HAP-1 (cell line): ENCODE measurements at regions of chr3 and their contacts with region 1.

Region 1: DNA sequence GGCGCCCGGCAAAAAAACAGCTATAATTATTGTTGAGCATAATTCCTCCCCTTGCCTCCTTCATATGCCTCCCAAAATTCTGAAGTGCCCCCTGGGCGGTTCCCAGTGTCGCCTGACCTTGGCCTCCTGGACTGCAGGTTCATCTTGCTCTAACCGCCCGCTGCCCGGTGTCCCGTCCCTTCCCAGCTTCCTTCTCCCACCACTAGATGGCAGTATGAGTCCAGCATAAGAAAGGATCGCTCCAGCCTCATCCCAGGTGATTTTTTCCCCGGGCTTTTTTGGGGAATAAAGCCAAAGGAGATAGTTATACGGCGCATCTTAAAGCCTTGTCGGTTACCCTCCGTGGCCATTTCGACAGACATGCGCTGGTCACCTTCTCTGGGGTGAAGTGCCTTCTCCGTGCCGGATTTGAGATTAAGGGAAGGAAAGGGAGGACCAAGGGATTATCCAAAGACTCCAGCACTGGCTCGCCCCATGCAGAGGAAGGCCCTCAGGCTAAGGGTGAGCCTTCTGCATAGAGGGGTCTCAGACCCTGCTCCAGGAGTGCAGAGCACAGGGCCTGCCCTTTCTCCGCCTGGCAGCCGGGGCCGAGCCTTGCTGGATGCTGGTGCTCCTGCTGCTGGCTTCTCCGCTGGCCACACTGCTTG is 45.8 kb upstream of the TRA2B start:
- DNase-seq: peak; percentile 65 to 85
- H3K4me3 ChIP-seq: no peak overlapping the region
- H3K4me1 ChIP-seq: no peaks in the 10 kb centered on the region
- H3K27me3 ChIP-seq: no peaks in the 10 kb centered on the region; the same call in 1 of the 2 replicates

Region 2: DNA sequence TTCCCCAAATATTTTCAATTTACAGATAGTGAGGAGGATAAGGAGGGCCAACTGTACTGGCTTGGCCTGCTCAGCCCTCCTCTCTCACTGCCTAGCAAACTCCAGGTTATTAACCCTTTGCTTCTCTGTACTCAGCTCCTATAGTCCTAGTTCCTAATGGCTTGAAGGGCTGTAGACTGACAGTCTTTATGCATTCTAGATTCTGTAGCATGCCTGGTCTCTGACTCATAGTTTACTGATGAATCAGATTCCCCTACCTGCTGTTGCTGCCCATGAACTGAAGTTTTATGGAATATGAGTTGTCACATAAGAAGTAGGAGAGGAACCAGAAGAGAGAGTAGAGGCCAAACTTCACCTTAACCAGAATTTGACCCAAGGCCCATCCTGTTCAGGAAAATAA is 647.8 kb before region 1 on chr3:
- in situ Hi-C with region 1: no loop called
- DNase-seq: no peak
- H3K4me3 ChIP-seq: no peak overlapping the region
- H3K4me1 ChIP-seq: peaks cover 3% of the 10 kb centered on the region; the same call in 1 of the 2 replicates
- H3K27me3 ChIP-seq: no peaks in the 10 kb centered on the region

Region 3: GRCh38 chr3:185711255-185711870 is 272.3 kb before region 1 on chr3:
- in situ Hi-C with region 1: no loop called
- DNase-seq: no peak
- H3K4me3 ChIP-seq: no peak overlapping the region
- H3K4me1 ChIP-seq: no peaks in the 10 kb centered on the region
- H3K27me3 ChIP-seq: no peaks in the 10 kb centered on the region

Region 4: GRCh38 chr3:185846037-185846436 is 137.6 kb before region 1 on chr3:
- in situ Hi-C with region 1: no loop called
- DNase-seq: peak in 1 of 2 experiments; percentile 23
- H3K4me3 ChIP-seq: no peak overlapping the region
- H3K4me1 ChIP-seq: peaks cover 6% of the 10 kb centered on the region; the same call in 1 of the 2 replicates
- H3K27me3 ChIP-seq: no peaks in the 10 kb centered on the region

Region 5: DNA sequence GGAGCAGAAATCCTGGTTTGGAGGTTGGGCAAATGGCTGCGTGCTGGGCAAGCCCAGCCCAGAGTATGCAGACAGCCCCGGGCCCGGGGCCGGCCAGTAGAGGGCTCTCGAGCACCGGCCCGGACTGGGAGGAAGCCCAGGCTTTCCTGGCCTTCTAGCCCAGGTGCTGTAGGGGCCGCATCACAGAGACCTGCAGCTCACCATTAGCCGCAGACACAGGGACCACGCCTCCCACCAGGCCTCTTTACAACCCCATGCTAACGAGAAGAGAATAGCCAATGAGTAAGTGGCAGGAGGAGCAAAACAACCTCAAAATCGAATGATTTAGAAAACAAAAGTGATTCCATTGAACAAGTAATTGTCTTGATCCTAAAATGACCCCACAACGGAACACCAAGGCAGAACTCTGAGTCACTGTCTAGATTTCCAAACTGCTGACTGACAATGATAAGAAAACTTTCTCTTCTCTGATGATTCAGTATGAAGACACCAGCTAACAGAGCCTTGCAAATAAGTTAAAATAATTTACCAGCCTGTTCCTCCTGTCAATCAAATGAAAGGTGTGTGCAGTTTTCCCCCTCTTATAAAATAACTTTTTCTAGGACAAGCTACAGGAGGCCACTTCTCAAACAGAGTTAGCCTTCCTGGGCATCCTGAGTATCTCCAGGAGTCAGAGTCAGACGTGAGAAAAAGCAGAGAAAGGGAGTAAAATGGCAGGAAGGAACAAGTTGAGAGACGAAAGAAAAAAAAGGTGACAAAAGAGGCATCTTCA is 276.2 kb after region 1 on chr3:
- in situ Hi-C with region 1: loop called (anchors 10 kb)
- DNase-seq: peak; percentile 66 to 83
- H3K4me3 ChIP-seq: no peak overlapping the region
- H3K4me1 ChIP-seq: peaks cover 3% of the 10 kb centered on the region; the same call in 1 of the 2 replicates
- H3K27me3 ChIP-seq: no peaks in the 10 kb centered on the region; the same call in 1 of the 2 replicates

Region 6: GRCh38 chr3:186540221-186540834 is 556.7 kb after region 1 on chr3:
- in situ Hi-C with region 1: loop called (anchors 5 kb)
- DNase-seq: peak; percentile 59 to 79
- H3K4me3 ChIP-seq: no peak overlapping the region
- H3K4me1 ChIP-seq: peaks cover 6% of the 10 kb centered on the region
- H3K27me3 ChIP-seq: no peaks in the 10 kb centered on the region